A673 (cell line): ENCODE measurements at regions of chr16 and their contacts with region 1.

Region 1: DNA sequence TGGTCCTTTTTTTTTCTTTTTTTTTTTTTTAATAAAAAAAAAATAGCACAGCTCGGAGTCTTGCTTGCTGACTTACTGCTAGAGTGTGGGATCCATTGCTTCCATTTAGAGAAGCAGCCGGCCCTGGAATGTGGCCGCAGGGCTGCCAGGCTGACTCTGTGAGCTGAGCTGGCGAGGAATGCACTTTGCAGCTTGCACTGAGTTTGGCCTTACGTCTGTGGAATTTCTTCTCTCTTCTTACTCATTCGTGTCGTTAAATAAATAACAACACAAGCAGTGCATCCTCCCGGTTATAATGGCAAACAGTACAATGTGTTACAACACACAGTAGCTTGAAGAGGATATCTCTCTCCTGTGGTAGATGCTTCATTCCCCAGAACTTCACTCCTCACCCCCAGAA is 69.2 kb downstream of the PRKCB start:
- DNase-seq: peak; percentile 69
- H3K4me3 ChIP-seq: peak overlapping the region; percentile 3
- H3K27ac ChIP-seq: peak overlapping the region; percentile 97
- H3K4me1 ChIP-seq: peaks cover 92% of the 10 kb centered on the region
- H3K27me3 ChIP-seq: no peaks in the 10 kb centered on the region
- CTCF ChIP-seq: no peak

Region 2: DNA sequence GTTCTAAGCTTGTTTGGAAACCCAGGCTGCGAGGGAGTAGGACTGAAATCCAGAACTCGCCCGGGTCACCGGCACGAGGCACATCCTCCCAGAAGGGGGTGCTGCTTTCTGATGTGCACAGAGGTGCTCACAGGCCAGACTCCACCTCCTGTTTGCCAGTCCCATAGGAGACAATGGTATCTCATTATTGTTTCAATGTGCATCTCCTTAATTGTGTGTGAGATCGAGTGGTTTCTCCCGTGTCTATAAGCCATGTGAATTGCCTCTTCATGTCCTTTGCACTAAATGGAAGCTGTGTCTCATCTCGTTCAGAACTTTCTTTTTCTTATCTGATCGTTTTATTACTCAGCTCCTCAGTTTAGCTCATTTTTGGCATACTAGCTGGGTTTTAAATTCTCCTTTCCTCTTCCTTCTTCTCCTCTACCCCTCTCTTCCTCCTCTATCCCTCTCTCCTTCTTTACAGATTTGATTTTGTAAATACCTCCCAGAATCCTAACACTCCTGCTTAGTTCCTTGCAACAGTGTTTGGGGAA is 101.4 kb before region 1 on chr16:
- CTCF ChIA-PET with region 1: no interaction called
- POLR2A ChIA-PET with region 1: no interaction called
- intact Hi-C with region 1: loop called (anchors 5 kb)
- DNase-seq: peak; percentile 91
- H3K4me3 ChIP-seq: peak overlapping the region; percentile 9
- H3K27ac ChIP-seq: peak overlapping the region; percentile 31
- H3K4me1 ChIP-seq: peaks cover 17% of the 10 kb centered on the region
- H3K27me3 ChIP-seq: no peaks in the 10 kb centered on the region
- CTCF ChIP-seq: peak; percentile 87

Region 3: DNA sequence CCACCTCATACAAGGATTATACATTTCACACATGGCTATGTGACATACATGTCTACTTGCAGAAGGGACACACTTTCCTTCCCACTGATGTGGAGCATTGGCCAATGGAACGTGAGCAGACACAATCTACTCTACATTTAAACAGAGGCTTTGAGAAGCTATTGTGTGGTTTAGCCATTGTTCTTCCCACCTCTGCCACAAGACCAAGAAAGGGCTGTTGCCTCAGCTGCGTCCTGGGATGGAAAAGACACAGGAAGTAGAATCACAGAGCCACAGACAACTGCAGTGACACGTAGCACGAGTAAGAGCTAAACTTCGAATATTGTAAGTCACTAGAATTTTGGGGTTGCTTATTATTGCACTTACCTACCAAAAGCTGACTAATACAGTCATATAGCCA is 36.0 kb before region 1 on chr16:
- CTCF ChIA-PET with region 1: no interaction called
- POLR2A ChIA-PET with region 1: no interaction called
- intact Hi-C with region 1: loop called (anchors 5 kb)
- DNase-seq: no peak
- H3K4me3 ChIP-seq: no peak overlapping the region
- H3K27ac ChIP-seq: peak overlapping the region; percentile 89
- H3K4me1 ChIP-seq: peaks cover 85% of the 10 kb centered on the region
- H3K27me3 ChIP-seq: no peaks in the 10 kb centered on the region
- CTCF ChIP-seq: no peak

Region 4: DNA sequence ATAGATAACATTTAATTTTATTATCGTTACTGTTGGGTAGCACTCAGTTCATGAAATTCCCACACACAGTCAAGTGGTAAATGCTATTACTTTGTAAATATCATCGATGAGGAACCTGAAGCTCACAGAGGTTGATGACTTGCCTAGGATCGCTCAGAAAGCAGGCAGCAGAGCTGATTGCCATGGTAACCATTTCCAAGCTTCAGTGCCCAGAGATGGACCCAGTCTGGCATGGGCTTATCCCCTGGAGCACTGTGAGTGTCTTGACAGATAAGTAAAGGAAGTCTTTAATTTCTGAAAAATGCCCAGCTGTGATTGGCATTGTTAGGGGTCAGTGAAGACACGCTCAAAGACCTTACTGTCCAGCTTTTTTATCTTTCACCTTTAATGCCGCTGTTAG is 25.8 kb after region 1 on chr16:
- CTCF ChIA-PET with region 1: no interaction called
- POLR2A ChIA-PET with region 1: no interaction called
- intact Hi-C with region 1: no loop called
- DNase-seq: no peak
- H3K4me3 ChIP-seq: no peak overlapping the region
- H3K27ac ChIP-seq: no peak overlapping the region
- H3K4me1 ChIP-seq: peaks cover 10% of the 10 kb centered on the region
- H3K27me3 ChIP-seq: no peaks in the 10 kb centered on the region
- CTCF ChIP-seq: no peak

Region 5: GRCh38 chr16:23987443-23987842 is 82.4 kb after region 1 on chr16:
- CTCF ChIA-PET with region 1: no interaction called
- POLR2A ChIA-PET with region 1: interaction called, 12 read pairs
- intact Hi-C with region 1: no loop called
- DNase-seq: no peak
- H3K4me3 ChIP-seq: no peak overlapping the region
- H3K27ac ChIP-seq: no peak overlapping the region
- H3K4me1 ChIP-seq: peaks cover 8% of the 10 kb centered on the region
- H3K27me3 ChIP-seq: no peaks in the 10 kb centered on the region
- CTCF ChIP-seq: no peak

Region 6: GRCh38 chr16:24015923-24016322 is 110.9 kb after region 1 on chr16:
- CTCF ChIA-PET with region 1: no interaction called
- POLR2A ChIA-PET with region 1: interaction called, 21 read pairs
- intact Hi-C with region 1: loop called (anchors 5 kb)
- DNase-seq: peak; percentile 32
- H3K4me3 ChIP-seq: no peak overlapping the region
- H3K27ac ChIP-seq: peak overlapping the region; percentile 1
- H3K4me1 ChIP-seq: peaks cover 71% of the 10 kb centered on the region
- H3K27me3 ChIP-seq: no peaks in the 10 kb centered on the region
- CTCF ChIP-seq: peak; percentile 33; the same call in 1 of the 2 replicates

Region 7: GRCh38 chr16:24198807-24199533 is 293.9 kb after region 1 on chr16:
- CTCF ChIA-PET with region 1: no interaction called
- POLR2A ChIA-PET with region 1: no interaction called
- intact Hi-C with region 1: no loop called
- DNase-seq: no peak
- H3K4me3 ChIP-seq: no peak overlapping the region
- H3K27ac ChIP-seq: no peak overlapping the region
- H3K4me1 ChIP-seq: peaks cover 4% of the 10 kb centered on the region
- H3K27me3 ChIP-seq: no peaks in the 10 kb centered on the region
- CTCF ChIP-seq: no peak

Region 8: DNA sequence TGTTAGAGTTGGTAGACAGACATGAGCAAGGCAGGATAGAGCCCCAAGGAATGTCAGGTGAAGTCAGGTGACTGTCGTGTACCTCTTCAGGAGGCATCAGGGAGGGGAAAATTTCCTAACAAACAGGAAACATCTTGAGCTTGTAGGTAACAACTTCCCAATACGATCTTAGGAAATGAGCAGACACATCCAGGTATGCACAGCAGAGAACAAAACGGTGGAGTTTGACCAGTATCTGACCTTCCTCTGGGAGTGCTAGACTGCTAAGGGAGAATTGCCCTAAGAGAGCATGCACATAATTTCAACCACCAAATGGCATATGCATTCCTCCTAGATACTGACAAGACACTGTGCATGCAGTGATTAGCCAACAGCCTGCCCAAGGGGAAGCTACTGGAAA is 513.6 kb after region 1 on chr16:
- CTCF ChIA-PET with region 1: no interaction called
- POLR2A ChIA-PET with region 1: no interaction called
- intact Hi-C with region 1: no loop called
- DNase-seq: no peak
- H3K4me3 ChIP-seq: no peak overlapping the region
- H3K27ac ChIP-seq: peak overlapping the region; percentile 85
- H3K4me1 ChIP-seq: peaks cover 17% of the 10 kb centered on the region
- H3K27me3 ChIP-seq: no peaks in the 10 kb centered on the region
- CTCF ChIP-seq: no peak